GM12878 (cell line): ENCODE measurements at regions of chr10 and their contacts with region 1.

Region 1: DNA sequence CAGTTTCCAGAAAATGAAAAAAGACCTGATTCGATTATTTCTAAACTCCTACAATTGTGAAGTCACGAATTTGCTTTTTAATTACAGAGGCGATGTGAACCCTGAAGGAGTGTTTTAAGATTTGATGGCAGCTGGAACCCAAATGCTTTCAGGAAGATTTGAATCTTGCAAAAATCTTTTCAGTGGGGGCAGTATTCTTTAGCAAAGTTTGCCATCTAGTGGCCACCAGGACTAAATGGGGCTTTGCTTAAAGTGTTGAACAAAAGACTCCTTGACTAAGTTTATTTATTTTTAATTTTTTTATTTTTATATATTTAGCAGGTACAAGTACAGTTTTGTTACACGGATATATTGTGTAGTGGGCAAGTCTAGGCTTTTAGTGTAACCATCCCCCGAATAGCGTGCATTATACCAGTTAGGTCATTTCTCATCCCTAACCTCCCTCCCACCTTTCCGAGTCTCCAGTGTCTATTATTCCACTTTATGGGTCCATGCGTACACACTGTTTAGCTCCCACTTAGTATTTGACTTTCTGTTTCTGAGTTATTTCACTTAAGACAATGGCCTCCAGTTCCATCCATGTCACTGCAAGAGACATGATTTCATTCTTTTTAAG is 98.8 kb downstream of the CACNB2 start:
- DNase-seq: no peak
- ATAC-seq: peak; percentile 66
- H3K4me3 ChIP-seq: no peak overlapping the region
- H3K27ac ChIP-seq: no peak overlapping the region
- H3K4me1 ChIP-seq: no peaks in the 10 kb centered on the region
- H3K27me3 ChIP-seq: peaks cover 0 to 3% of the 10 kb centered on the region in 2 experiments; a peak in 2 of 4 replicates
- CTCF ChIP-seq: peak; percentile 51 to 68 (median 58); a peak in 5 of 6 replicates
- EP300 ChIP-seq: no peak
- POLR2A ChIP-seq: no peak
- RAD21 ChIP-seq: peak; percentile 77

Region 2: GRCh38 chr10:17742918-17743317 is 496.1 kb before region 1 on chr10:
- CTCF ChIA-PET with region 1: no interaction called
- POLR2A ChIA-PET with region 1: no interaction called
- RAD21 ChIA-PET with region 1: no interaction called
- SMC1A ChIA-PET with region 1: no interaction called
- in situ Hi-C with region 1: no loop called
- intact Hi-C with region 1: loop called (anchors 1 kb)
- DNase-seq: no peak
- ATAC-seq: peak; percentile 58
- H3K4me3 ChIP-seq: no peak overlapping the region
- H3K27ac ChIP-seq: no peak overlapping the region
- H3K4me1 ChIP-seq: no peaks in the 10 kb centered on the region
- H3K27me3 ChIP-seq: no peaks in the 10 kb centered on the region; a peak in 1 of 4 replicates
- CTCF ChIP-seq: peak; percentile 70 to 83 (median 77)
- EP300 ChIP-seq: no peak
- POLR2A ChIP-seq: no peak
- RAD21 ChIP-seq: peak; percentile 70

Region 3: DNA sequence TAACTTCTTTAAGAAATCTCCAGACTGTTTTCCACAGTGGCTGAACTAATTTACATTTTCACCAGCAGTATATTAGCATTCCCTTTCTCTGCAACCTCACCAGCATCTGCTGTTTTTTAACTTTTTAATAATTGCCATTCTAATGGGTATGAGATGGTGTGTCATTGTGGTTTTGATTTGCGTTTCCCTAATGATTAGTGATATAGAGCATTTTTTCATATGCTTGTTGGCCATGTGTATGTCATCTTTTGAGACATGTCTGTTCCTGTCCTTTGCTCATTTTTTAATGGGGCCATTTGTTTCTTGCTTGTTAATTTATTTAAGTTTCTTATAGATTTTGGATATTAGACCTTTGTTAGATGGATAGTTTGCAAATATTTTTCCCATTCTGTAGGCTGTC is 218.5 kb before region 1 on chr10:
- CTCF ChIA-PET with region 1: no interaction called
- POLR2A ChIA-PET with region 1: no interaction called
- RAD21 ChIA-PET with region 1: no interaction called
- SMC1A ChIA-PET with region 1: no interaction called
- in situ Hi-C with region 1: no loop called
- intact Hi-C with region 1: no loop called
- DNase-seq: no peak
- ATAC-seq: no peak
- H3K4me3 ChIP-seq: no peak overlapping the region
- H3K27ac ChIP-seq: no peak overlapping the region
- H3K4me1 ChIP-seq: no peaks in the 10 kb centered on the region
- H3K27me3 ChIP-seq: no peaks in the 10 kb centered on the region
- CTCF ChIP-seq: no peak
- EP300 ChIP-seq: no peak
- POLR2A ChIP-seq: no peak
- RAD21 ChIP-seq: no peak

Region 4: GRCh38 chr10:18254086-18254485 is 15.1 kb after region 1 on chr10:
- CTCF ChIA-PET with region 1: interaction called, 16 read pairs
- POLR2A ChIA-PET with region 1: no interaction called
- RAD21 ChIA-PET with region 1: interaction called, 3 read pairs
- SMC1A ChIA-PET with region 1: interaction called, 4 read pairs
- in situ Hi-C with region 1: no loop called
- intact Hi-C with region 1: no loop called
- DNase-seq: no peak
- ATAC-seq: no peak
- H3K4me3 ChIP-seq: no peak overlapping the region
- H3K27ac ChIP-seq: no peak overlapping the region
- H3K4me1 ChIP-seq: no peaks in the 10 kb centered on the region
- H3K27me3 ChIP-seq: no peaks in the 10 kb centered on the region
- CTCF ChIP-seq: no peak
- EP300 ChIP-seq: no peak
- POLR2A ChIP-seq: no peak
- RAD21 ChIP-seq: no peak